ENCODE measurements at regions of chr2 and their contacts with region 1.

Region 1: GRCh38 chr2:64488050-64488974 is 34.4 kb downstream of the LGALSL start:
- DNase-seq: no peak
- H3K4me3 ChIP-seq: no peak overlapping the region
- H3K27me3 ChIP-seq: peaks cover 8% of the 10 kb centered on the region
- CTCF ChIP-seq: peak; percentile 85

Region 2: DNA sequence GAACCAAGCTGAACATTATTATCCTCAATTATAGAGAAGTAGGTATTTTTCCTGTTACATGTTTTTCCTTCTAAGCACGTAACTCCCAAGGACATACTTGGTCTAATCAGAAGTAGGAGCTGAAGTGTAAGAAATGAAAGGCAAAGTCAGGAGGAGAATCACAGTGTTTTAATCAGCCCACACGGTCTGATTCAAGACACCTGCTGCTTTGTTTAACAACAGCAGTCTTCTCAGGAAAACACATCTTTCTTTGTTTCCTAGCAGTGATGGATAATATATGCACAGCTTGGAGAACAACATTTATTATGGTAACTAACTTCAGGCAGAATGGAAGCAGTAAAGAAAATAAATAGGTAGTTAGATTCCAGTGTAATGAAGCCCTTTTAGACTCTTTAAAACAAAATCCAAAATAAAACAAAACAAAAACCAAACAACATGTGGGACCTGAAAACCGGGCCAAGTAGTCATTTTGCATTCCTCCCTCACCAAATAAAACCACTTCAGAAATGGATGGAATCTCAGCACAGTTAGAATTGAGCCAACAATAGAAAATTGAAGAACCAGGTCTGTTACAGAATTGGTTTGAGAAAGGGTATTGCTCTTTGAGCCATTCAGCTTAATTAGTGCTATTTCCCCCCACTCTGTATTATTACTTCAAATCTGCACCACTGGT is 707.7 kb before region 1 on chr2:
- CTCF ChIA-PET with region 1: no interaction called
- POLR2A ChIA-PET with region 1: no interaction called
- DNase-seq: no peak
- H3K4me3 ChIP-seq: no peak overlapping the region
- H3K27me3 ChIP-seq: no peaks in the 10 kb centered on the region
- CTCF ChIP-seq: no peak

Region 3: DNA sequence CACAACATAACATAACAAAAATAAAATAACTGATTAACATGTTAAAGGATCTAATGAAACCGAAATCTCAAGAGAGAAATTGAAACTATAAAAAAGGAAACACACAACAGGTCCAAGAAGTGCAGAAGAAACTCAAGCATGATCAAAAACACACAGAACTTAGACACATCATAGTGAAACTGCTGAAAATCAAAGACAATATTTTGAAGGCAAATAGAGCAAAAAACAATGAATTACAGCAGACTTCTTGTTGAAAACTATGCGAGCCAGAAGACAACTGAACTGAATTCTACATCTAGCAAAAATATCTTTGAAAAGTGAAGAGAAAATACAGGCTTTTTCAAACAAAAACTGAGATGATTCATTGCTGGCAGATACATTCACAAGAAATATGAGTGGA is 585.3 kb before region 1 on chr2:
- CTCF ChIA-PET with region 1: no interaction called
- POLR2A ChIA-PET with region 1: no interaction called
- DNase-seq: no peak
- H3K4me3 ChIP-seq: no peak overlapping the region
- H3K27me3 ChIP-seq: no peaks in the 10 kb centered on the region
- CTCF ChIP-seq: no peak

Region 4: DNA sequence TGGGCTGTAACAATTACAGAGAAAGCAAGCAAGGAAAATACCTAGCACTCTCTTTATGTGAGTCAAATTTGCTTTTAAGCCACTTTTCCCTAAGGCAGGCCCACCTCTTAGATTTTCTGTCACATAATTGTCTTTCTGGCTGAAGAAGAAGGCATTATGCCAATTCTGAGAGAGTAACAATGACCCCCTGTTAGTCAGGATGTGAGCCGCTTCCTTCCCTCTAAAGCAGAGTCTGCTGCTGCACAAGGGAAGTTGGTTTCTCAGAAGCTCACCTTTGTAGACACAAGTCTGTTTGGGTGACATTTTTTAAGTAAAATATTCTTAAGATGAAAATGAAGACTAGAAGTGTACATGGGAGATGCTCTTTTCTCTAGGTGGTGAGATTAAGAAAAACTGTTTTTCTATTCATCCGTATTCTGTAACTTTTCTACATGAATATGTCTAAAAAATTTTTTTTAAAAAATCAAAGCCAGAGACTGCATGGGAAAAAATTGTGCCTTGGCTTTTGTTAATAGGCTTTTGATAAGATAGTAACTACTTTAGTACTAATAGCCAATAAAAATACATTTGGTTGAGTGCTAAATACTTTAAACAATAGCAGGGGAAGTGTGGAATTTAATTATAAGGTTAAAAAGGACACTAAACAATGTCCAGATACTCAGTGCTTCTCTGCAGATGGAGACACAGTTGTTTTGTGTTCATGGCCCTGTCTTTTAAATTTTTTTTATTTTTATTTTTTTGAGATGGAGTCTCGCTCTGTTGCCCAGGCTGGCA is 435.7 kb before region 1 on chr2:
- CTCF ChIA-PET with region 1: interaction called, 29 read pairs
- POLR2A ChIA-PET with region 1: no interaction called
- DNase-seq: no peak
- H3K4me3 ChIP-seq: no peak overlapping the region
- H3K27me3 ChIP-seq: no peaks in the 10 kb centered on the region; the same call in 1 of the 2 replicates
- CTCF ChIP-seq: no peak

Region 5: DNA sequence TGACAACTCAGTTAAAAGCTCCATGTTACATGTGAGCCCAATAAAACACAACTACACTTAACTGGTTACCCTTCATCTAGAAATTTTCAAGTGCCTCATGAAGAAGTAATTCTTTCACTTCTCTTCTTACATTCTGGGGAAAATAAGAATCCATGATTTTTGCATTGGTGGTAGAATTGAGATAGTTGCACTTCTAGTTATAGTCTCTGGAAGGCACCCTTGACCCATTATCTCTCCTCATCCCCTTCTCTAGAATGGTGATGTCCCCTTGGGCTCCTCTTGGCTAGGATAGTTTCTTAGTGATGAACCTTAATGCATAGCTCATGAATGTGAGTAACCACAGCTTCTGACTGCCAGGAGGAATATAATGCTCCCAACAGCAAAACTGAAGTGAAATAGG is 30.8 kb before region 1 on chr2:
- CTCF ChIA-PET with region 1: interaction called, 12 read pairs
- POLR2A ChIA-PET with region 1: no interaction called
- DNase-seq: no peak
- H3K4me3 ChIP-seq: no peak overlapping the region
- H3K27me3 ChIP-seq: no peaks in the 10 kb centered on the region
- CTCF ChIP-seq: no peak

Region 6: DNA sequence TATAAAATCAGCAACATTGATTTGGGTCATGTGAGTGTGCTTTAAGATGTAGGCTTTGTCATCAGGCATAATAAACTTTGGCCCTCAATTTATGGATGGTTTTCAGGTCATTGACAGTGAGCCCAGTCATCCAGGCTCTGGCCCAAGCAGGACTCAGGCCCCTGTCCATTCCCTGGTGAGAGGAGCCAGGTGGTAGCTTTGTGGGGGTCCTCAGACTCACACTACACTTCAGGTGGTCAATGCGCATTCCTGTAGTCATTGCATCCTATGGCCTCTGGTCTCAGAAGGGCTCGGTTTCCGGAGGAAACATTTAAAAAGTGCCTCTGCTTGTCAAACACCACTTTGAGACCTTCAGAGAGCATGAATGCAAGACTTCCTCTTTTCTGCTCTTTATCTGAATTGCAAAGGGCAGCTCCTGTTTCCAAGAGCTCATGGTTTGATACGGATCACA is 14.2 kb before region 1 on chr2:
- CTCF ChIA-PET with region 1: interaction called, 17 read pairs
- POLR2A ChIA-PET with region 1: no interaction called
- DNase-seq: no peak
- H3K4me3 ChIP-seq: no peak overlapping the region
- H3K27me3 ChIP-seq: peaks cover 13% of the 10 kb centered on the region
- CTCF ChIP-seq: no peak

Region 7: DNA sequence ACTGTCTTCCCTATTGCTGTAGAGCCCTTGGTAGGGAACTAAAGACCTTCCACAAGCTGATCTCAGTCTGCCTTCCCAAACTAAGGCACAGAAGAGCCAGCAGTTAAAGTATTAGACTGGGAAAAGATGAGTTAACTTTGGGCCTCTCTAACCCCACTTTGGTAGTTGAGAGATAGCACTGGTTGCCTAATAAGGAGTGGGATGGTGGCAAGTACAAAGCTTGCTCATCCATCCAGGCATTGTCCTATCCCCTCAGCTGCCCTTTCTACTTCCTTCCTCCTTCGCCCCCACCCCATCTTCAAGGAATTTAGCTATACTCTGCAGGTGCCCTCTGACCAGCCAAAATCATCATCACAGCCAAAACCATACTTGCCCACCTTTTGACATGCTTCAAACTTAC is 13.6 kb after region 1 on chr2:
- CTCF ChIA-PET with region 1: interaction called, 25 read pairs
- POLR2A ChIA-PET with region 1: no interaction called
- DNase-seq: no peak
- H3K4me3 ChIP-seq: no peak overlapping the region
- H3K27me3 ChIP-seq: peaks cover 25% of the 10 kb centered on the region
- CTCF ChIP-seq: no peak

Region 8: DNA sequence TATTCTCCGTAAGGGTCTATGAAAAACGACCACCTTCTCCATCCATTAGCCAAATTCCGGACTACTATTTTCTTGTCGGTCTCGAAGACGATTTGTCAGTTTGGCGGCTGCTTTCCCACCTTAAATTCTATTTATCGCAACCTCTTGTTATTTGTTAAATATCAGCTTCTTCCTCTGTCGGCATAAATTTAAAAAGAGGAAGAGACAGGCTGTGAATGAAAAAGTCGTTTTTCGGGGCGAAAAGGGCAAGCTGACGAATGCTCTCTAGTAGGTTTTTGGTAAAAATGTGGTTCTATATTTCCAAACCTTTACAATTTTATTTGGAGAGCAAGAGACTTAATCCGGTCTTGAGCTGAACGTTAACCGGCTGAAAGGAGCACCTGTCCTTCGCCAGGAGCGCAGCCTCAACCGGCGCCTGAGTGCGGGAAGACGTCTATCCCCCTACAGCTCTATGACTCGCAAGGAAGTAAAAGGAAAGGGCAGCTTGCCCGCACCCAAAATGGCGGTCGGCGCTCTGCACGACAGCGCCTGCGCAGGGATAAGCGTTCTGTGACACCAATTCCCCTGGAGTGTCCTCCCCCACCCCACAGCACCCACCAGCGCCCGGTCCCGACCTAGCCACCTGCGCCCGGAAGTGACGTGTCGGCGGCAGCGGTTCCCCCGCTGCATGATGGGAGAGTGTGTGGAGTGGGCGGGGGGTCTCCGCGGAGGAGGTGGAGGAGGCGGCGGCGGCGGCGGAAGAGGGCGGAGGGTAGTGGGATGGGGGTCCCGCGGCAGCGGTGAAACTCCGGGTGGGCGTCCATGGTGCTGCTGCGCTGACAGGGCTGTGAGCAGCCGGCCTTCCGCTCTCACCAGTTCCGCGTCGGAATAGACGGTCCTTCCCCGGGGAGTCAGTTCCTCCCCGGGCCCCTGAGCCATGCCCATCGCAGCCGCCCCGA is 35.6 kb after region 1 on chr2 and contains the start of gene AFTPH:
- CTCF ChIA-PET with region 1: interaction called, 10 read pairs
- POLR2A ChIA-PET with region 1: no interaction called
- DNase-seq: peak; percentile 93
- H3K4me3 ChIP-seq: peak within 1 kb of the TSS; percentile 73
- H3K27me3 ChIP-seq: peaks cover 6% of the 10 kb centered on the region
- CTCF ChIP-seq: no peak
- polyA plus RNA-seq, gene AFTPH: 10.9 and 21.7 TPM in 2 replicates

Region 9: DNA sequence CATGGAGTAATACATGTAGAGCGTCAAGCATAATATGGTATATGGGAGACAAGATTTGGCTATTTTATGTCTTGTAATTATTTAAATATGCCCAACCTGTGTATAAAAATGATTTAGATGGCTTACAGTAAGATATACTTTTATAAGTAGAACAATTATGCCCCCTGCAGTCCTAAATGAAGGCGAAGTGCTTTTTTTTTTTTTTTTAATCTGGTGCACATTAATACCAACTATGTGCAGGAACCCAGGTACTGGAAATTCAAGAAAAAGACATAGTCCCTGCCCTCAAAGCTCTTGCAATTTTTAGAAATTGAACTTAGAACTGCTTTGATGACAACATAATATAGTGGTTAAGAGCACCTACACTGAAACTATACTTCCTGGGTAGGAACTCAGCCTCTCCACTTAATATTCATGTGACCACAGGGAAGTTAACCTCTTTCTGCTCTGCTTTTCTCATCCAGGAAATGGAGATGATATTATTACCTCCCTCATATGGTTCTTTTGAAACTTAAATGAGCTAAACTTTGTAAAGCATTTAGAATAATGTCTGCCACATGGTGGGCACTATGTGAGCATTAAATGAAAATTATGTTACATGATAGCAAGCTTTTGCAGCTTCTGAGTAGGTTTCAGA is 74.0 kb after region 1 on chr2:
- CTCF ChIA-PET with region 1: no interaction called
- POLR2A ChIA-PET with region 1: no interaction called
- DNase-seq: no peak
- H3K4me3 ChIP-seq: no peak overlapping the region
- H3K27me3 ChIP-seq: no peaks in the 10 kb centered on the region
- CTCF ChIP-seq: peak; percentile 36; the same call in 1 of the 2 replicates